ENCODE measurements at regions of chr12 and their contacts with region 1.

Region 1: GRCh38 chr12:110269622-110270124 is 11.4 kb upstream of the ATP2A2 start:
- DNase-seq: no peak
- ATAC-seq: peak; percentile 22 to 73
- H3K4me3 ChIP-seq: no peak overlapping the region
- H3K27ac ChIP-seq: peak overlapping the region; percentile 79
- H3K4me1 ChIP-seq: peaks cover 5% of the 10 kb centered on the region
- H3K27me3 ChIP-seq: no peaks in the 10 kb centered on the region

Region 2: GRCh38 chr12:110254971-110255540 is 14.6 kb before region 1 on chr12:
- intact Hi-C with region 1: loop called in 1 of 4 experiments (anchors 2 kb)
- DNase-seq: peak in 1 of 3 donors; percentile 24
- ATAC-seq: no peak
- H3K4me3 ChIP-seq: no peak overlapping the region
- H3K27ac ChIP-seq: no peak overlapping the region
- H3K4me1 ChIP-seq: peaks cover 4% of the 10 kb centered on the region
- H3K27me3 ChIP-seq: no peaks in the 10 kb centered on the region

Region 3: DNA sequence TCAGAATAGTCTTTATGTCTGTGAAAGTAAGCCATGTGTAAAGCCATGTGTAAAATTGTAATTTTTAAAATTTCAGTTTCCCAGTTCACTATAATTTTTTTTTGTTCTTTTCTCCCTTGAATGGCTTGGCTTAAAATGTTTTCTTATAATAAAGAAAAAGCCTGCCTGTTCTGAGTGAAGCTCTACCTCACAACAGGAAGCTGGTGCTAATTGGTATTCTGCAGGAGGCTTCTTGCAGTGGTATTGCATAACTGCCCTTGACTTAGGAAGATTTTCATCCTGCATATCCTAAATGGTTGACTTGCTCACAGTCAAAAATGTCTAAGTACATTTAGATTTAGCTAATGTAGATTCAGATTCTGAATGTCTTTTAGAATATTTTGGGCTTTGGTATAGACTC is 60.9 kb after region 1 on chr12:
- intact Hi-C with region 1: no loop called
- DNase-seq: no peak
- ATAC-seq: no peak
- H3K4me3 ChIP-seq: no peak overlapping the region
- H3K27ac ChIP-seq: no peak overlapping the region
- H3K4me1 ChIP-seq: no peaks in the 10 kb centered on the region
- H3K27me3 ChIP-seq: no peaks in the 10 kb centered on the region

Measured in right cardiac atrium (tissue), 5 donors.